ENCODE measurements at regions of chr1 and their contacts with region 1.

Region 1: GRCh38 chr1:37692078-37692833 is at the start of gene CDCA8:
- DNase-seq: peak; percentile 99
- ATAC-seq: peak; percentile 88
- H3K4me3 Mint-ChIP-seq: peak within 1 kb of the TSS; percentile 97
- H3K27ac Mint-ChIP-seq: peak within 1 kb of the TSS; percentile 92
- H3K4me1 Mint-ChIP-seq: peaks cover 32% of the 10 kb centered on the region
- H3K27me3 Mint-ChIP-seq: no peaks in the 10 kb centered on the region
- total RNA-seq, gene CDCA8: 61.2 to 61.7 TPM

Region 2: GRCh38 chr1:36385410-36386257 is 1306.6 kb before region 1 on chr1 and contains the start of gene STK40:
- CTCF ChIA-PET with region 1: no interaction called
- POLR2A ChIA-PET with region 1: no interaction called
- intact Hi-C with region 1: loop called in 1 of 2 experiments (anchors 5 kb)
- DNase-seq: peak; percentile 99
- ATAC-seq: peak; percentile 88
- H3K4me3 Mint-ChIP-seq: peak within 1 kb of the TSS; percentile 81
- H3K27ac Mint-ChIP-seq: peak within 1 kb of the TSS; percentile 100
- H3K4me1 Mint-ChIP-seq: peaks cover 58% of the 10 kb centered on the region
- H3K27me3 Mint-ChIP-seq: no peaks in the 10 kb centered on the region
- total RNA-seq, gene STK40: 38.8 to 51.3 TPM

Region 3: GRCh38 chr1:36871146-36871981 is 820.9 kb before region 1 on chr1:
- CTCF ChIA-PET with region 1: no interaction called
- POLR2A ChIA-PET with region 1: no interaction called
- intact Hi-C with region 1: no loop called
- DNase-seq: no peak
- ATAC-seq: no peak
- H3K4me3 Mint-ChIP-seq: no peak overlapping the region
- H3K27ac Mint-ChIP-seq: no peak overlapping the region
- H3K4me1 Mint-ChIP-seq: no peaks in the 10 kb centered on the region
- H3K27me3 Mint-ChIP-seq: peaks cover 2% of the 10 kb centered on the region

Region 4: DNA sequence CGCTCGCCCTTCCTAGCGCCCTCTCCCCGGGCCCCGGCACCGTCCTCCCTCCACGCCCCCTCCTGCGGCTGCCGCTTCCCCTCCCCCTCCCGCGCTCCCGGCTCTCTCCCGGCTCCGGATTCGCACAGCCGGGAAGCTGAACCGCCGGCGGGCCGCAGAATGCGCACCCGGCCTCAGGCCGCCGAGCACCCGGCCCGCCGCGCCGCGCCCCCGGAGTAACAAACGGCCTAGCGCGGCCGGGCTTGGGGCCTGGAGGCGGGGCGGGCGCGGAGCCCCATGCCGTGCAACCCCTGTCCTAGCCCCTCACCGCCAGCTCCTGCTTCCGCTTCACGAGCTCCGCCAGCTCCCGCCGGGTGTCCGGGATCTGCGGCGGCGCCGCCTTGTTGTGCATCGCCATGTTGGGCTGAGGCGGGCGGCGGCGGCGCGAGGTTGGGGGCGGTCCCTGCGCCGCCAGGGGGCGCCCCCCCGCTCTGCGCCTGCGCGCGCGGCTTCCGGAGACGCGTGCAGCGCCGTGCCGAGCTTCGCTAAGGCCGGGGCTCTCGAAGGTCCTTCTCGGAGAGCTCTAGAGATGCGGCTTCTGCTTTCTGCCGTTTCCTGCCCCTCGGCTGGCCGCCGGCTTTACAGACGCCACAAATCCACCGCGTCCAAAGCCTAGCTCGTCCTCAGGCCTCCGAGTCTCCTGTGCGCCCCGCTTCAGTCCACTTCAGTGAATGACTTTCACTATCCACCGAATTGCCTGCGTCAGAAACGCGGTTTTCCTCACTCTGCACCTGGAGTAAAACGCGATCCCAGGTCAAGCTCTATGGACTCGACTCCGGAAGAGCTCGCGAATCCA is 177.7 kb before region 1 on chr1 and contains the start of gene MEAF6:
- CTCF ChIA-PET with region 1: interaction called, 4 read pairs
- POLR2A ChIA-PET with region 1: interaction called, 7 read pairs
- intact Hi-C with region 1: loop called in 1 of 2 experiments (anchors 1 kb)
- DNase-seq: peak; percentile 91
- ATAC-seq: peak; percentile 88
- H3K4me3 Mint-ChIP-seq: peak within 1 kb of the TSS; percentile 87
- H3K27ac Mint-ChIP-seq: peak within 1 kb of the TSS; percentile 93
- H3K4me1 Mint-ChIP-seq: peaks cover 41% of the 10 kb centered on the region
- H3K27me3 Mint-ChIP-seq: no peaks in the 10 kb centered on the region
- total RNA-seq, gene MEAF6: 66.8 to 72.2 TPM

Region 5: DNA sequence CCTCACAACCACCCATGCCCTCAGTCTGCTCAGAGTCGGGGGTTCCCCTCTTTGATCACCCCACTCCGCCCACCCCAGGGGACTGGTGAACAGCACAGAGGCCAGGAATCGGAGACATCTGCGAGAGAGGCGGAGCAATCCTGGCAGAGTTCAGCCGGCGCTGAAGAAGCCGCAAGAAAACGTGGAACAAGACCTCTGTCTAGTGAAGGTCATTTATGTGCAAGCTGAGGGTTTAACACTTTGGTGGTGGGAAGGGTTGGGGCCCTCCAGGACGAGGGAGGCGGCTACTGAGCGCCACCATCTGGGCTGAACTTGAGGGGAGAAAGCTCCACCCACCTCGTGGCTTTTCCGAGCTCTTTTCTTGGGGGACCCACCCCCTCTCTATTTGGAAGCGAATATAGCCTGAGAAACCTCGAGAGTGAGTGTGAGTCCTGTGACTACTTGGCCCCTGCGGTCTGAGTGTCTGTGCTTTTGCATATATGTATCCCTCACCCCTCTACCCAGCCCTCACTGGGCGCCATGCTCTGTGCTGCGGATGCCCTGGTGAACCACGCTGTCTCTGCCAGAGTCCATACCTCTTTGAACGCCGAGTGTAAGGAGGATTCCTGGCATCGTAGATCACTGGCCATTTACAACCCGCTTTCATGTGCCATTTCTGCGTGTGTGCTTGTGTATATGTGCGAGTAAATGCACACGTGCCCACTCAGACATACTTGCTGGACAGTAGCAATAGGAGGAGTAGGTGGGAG is 73.8 kb after region 1 on chr1:
- CTCF ChIA-PET with region 1: interaction called, 3 read pairs
- POLR2A ChIA-PET with region 1: no interaction called
- intact Hi-C with region 1: loop called in 1 of 2 experiments (anchors 1 kb)
- DNase-seq: peak; percentile 67
- ATAC-seq: peak; percentile 83
- H3K4me3 Mint-ChIP-seq: peak overlapping the region; percentile 30
- H3K27ac Mint-ChIP-seq: no peak overlapping the region
- H3K4me1 Mint-ChIP-seq: peaks cover 18% of the 10 kb centered on the region
- H3K27me3 Mint-ChIP-seq: peaks cover 72% of the 10 kb centered on the region

Region 6: DNA sequence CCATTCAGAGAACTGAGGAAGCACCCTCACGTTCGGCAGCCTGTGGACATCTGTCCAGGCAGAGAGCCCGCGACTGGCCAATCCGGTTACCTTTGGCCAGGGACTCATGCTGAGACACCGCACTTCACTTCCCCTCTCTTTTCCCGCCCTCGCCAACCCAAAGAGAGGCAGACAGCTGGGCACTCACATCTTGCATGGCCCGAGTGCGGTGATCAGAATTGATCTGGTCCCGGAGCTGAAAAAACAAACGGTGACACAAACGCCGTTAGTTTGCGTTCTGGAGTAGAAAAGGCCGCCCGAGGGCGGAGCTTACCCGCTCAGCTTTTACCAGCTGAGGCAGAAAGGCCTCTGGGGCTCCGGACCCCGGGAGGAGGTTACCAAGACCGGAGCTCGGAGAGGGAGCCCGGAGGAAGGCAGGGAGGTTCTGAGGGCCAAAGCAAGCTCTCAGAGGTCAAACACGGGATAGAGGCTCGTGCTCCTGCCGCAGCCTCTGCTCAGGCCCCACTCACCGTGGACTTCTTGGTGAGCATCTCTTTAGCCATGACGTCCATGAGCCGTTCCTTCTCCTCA is 297.2 kb after region 1 on chr1:
- CTCF ChIA-PET with region 1: no interaction called
- POLR2A ChIA-PET with region 1: no interaction called
- intact Hi-C with region 1: loop called (anchors 1 to 5 kb)
- DNase-seq: peak; percentile 67
- ATAC-seq: peak; percentile 31
- H3K4me3 Mint-ChIP-seq: peak overlapping the region; percentile 93
- H3K27ac Mint-ChIP-seq: peak overlapping the region; percentile 90
- H3K4me1 Mint-ChIP-seq: peaks cover 20% of the 10 kb centered on the region
- H3K27me3 Mint-ChIP-seq: no peaks in the 10 kb centered on the region

Region 7: GRCh38 chr1:38873027-38873969 is 1181.0 kb after region 1 on chr1 and contains the start of gene MYCBP:
- CTCF ChIA-PET with region 1: no interaction called
- POLR2A ChIA-PET with region 1: no interaction called
- intact Hi-C with region 1: loop called in 1 of 2 experiments (anchors 1 kb)
- DNase-seq: peak; percentile 97
- ATAC-seq: peak; percentile 99
- H3K4me3 Mint-ChIP-seq: peak within 1 kb of the TSS; percentile 92
- H3K27ac Mint-ChIP-seq: peak within 1 kb of the TSS; percentile 83
- H3K4me1 Mint-ChIP-seq: peaks cover 26% of the 10 kb centered on the region
- H3K27me3 Mint-ChIP-seq: no peaks in the 10 kb centered on the region
- total RNA-seq, gene MYCBP: 44.4 to 46.8 TPM

Measured in activated CD4-positive, alpha-beta T cell treated with anti-CD3 and anti-CD28 coated beads for 36 hours (primary cell).